CD8-positive, alpha-beta T cell (primary cell): ENCODE measurements at regions of chr7 and their contacts with region 1.

Region 1: DNA sequence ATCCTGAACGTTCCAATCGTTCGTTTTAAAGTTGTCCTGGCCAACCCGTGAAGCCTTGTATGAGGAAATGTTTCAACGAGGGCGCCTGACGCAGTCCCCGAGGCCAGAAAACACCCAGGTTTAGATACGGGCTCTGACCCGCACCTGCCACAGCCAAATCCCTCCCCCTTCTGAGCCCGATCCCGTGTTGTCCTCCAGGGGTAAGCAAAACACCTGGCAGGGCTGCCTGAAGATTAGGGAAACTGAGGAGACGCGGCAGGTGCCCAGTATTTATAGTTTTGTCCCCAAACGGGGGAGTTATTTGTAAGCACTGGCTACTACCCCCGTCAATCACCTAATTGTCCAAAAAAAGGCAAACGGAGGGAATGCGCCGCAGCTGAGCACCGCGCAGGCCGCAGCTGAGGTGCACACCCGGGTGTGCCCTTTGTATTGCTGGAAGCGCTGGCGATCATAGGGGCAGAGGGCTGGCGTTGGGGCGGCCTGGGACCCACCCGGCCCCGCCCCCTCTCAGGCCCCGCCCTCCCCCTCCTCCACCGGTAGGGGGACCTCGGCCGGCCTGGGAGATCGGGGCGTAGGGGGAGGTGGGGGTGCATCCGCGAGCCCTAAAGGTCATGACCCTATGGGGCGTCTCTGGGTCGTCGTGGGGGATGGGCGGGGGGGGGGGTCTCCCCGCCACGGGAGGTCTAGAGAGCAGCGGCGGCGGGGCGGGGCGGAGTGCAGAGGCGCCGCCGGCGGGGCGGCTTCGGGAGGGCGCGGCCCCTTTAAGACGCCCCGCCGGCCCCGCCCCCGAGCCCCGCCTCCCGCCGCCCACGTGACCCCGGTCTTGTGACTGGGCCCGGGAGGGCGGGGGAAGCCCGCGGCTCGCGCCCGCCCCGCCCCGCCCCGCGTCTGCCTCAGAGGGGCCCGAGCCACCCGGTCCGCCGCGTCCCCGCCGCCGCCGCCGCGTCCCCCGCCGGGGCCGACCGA is at the start of gene BRI3:
- DNase-seq: peak; percentile 86 to 95 (median 92)
- ATAC-seq: peak; percentile 81
- H3K4me3 ChIP-seq: peak within 1 kb of the TSS; percentile 72 to 88
- H3K4me3 Mint-ChIP-seq: peak within 1 kb of the TSS; percentile 91
- H3K27ac ChIP-seq: peak within 1 kb of the TSS; percentile 62 to 67
- H3K27ac Mint-ChIP-seq: peak within 1 kb of the TSS; percentile 90
- H3K4me1 ChIP-seq: peaks cover 42% of the 10 kb centered on the region
- H3K4me1 Mint-ChIP-seq: peaks cover 33% of the 10 kb centered on the region
- H3K27me3 ChIP-seq: no peaks in the 10 kb centered on the region
- H3K27me3 Mint-ChIP-seq: no peaks in the 10 kb centered on the region
- CTCF ChIP-seq: no peak
- total RNA-seq, gene BRI3: 70.6 to 70.8 TPM

Region 2: GRCh38 chr7:98240961-98241674 is 40.0 kb before region 1 on chr7:
- CTCF ChIA-PET with region 1: no interaction called
- POLR2A ChIA-PET with region 1: interaction called, 3 read pairs
- intact Hi-C with region 1: loop called in 1 of 2 experiments (anchors 10 kb)
- DNase-seq: peak in 4 of 9 experiments; percentile 17 to 46 (median 37)
- ATAC-seq: peak; percentile 68
- H3K4me3 ChIP-seq: no peak overlapping the region
- H3K4me3 Mint-ChIP-seq: no peak overlapping the region
- H3K27ac ChIP-seq: no peak overlapping the region
- H3K27ac Mint-ChIP-seq: no peak overlapping the region
- H3K4me1 ChIP-seq: peaks cover 4% of the 10 kb centered on the region
- H3K4me1 Mint-ChIP-seq: no peaks in the 10 kb centered on the region
- H3K27me3 ChIP-seq: no peaks in the 10 kb centered on the region
- H3K27me3 Mint-ChIP-seq: no peaks in the 10 kb centered on the region
- CTCF ChIP-seq: no peak

Region 3: GRCh38 chr7:98266840-98267239 is 14.2 kb before region 1 on chr7:
- CTCF ChIA-PET with region 1: interaction called, 4 read pairs
- POLR2A ChIA-PET with region 1: interaction called, 4 read pairs
- intact Hi-C with region 1: loop called in 1 of 2 experiments (anchors 2 kb)
- DNase-seq: no peak
- ATAC-seq: peak; percentile 34
- H3K4me3 ChIP-seq: no peak overlapping the region
- H3K4me3 Mint-ChIP-seq: no peak overlapping the region
- H3K27ac ChIP-seq: no peak overlapping the region
- H3K27ac Mint-ChIP-seq: peak overlapping the region; percentile 45
- H3K4me1 ChIP-seq: no peaks in the 10 kb centered on the region
- H3K4me1 Mint-ChIP-seq: no peaks in the 10 kb centered on the region
- H3K27me3 ChIP-seq: no peaks in the 10 kb centered on the region
- H3K27me3 Mint-ChIP-seq: no peaks in the 10 kb centered on the region
- CTCF ChIP-seq: no peak

Region 4: GRCh38 chr7:98878365-98879165 is 597.5 kb after region 1 on chr7 and contains the start of gene TRRAP:
- CTCF ChIA-PET with region 1: no interaction called
- POLR2A ChIA-PET with region 1: no interaction called
- intact Hi-C with region 1: loop called in 1 of 2 experiments (anchors 5 kb)
- DNase-seq: peak; percentile 56 to 87 (median 73)
- ATAC-seq: peak; percentile 63
- H3K4me3 ChIP-seq: peak within 1 kb of the TSS; percentile 82 to 92
- H3K4me3 Mint-ChIP-seq: peak within 1 kb of the TSS; percentile 98
- H3K27ac ChIP-seq: peak within 1 kb of the TSS; percentile 77 to 82
- H3K27ac Mint-ChIP-seq: peak within 1 kb of the TSS; percentile 96
- H3K4me1 ChIP-seq: peaks cover 16% of the 10 kb centered on the region
- H3K4me1 Mint-ChIP-seq: peaks cover 24% of the 10 kb centered on the region
- H3K27me3 ChIP-seq: no peaks in the 10 kb centered on the region
- H3K27me3 Mint-ChIP-seq: peaks cover 2% of the 10 kb centered on the region
- CTCF ChIP-seq: peak; percentile 94
- total RNA-seq, gene TRRAP: 39.8 to 43.0 TPM